K562 (cell line): ENCODE measurements at regions of chr3 and their contacts with region 1.

Region 1: GRCh38 chr3:52278510-52279069 is at the start of gene WDR82:
- DNase-seq: peak; percentile 87 to 93 (median 89)
- ATAC-seq: peak; percentile 88
- H3K4me3 ChIP-seq: peak within 1 kb of the TSS; percentile 73
- H3K27ac ChIP-seq: peak within 1 kb of the TSS; percentile 95
- H3K4me1 ChIP-seq: peaks cover 12 to 13% of the 10 kb centered on the region in 2 experiments; a peak in 4 of 5 replicates
- H3K27me3 ChIP-seq: no peaks in the 10 kb centered on the region
- CTCF ChIP-seq: peak; percentile 42 to 54 (median 52); a peak in 4 of 6 replicates
- EP300 ChIP-seq: no peak
- POLR2A ChIP-seq: peak; percentile 87
- RAD21 ChIP-seq: peak; percentile 27 to 39; a peak in 3 of 4 replicates
- polyA plus RNA-seq, gene WDR82: 6.4 to 8.0 TPM

Region 2: GRCh38 chr3:52046186-52046913 is 232.2 kb before region 1 on chr3:
- CTCF ChIA-PET with region 1: no interaction called
- POLR2A ChIA-PET with region 1: no interaction called
- in situ Hi-C with region 1: no loop called
- intact Hi-C with region 1: no loop called
- DNase-seq: no peak
- ATAC-seq: no peak
- H3K4me3 ChIP-seq: no peak overlapping the region
- H3K27ac ChIP-seq: no peak overlapping the region
- H3K4me1 ChIP-seq: peaks cover 3 to 39% of the 10 kb centered on the region in 2 experiments; a peak in 4 of 5 replicates
- H3K27me3 ChIP-seq: peaks cover 0 to 5% of the 10 kb centered on the region in 2 experiments; a peak in 1 of 5 replicates
- CTCF ChIP-seq: no peak
- EP300 ChIP-seq: no peak
- POLR2A ChIP-seq: no peak
- RAD21 ChIP-seq: no peak

Region 3: GRCh38 chr3:52240059-52240879 is 38.3 kb before region 1 on chr3:
- CTCF ChIA-PET with region 1: no interaction called
- POLR2A ChIA-PET with region 1: interaction called, 5 read pairs
- in situ Hi-C with region 1: no loop called
- intact Hi-C with region 1: loop called (anchors 1 kb)
- DNase-seq: peak; percentile 33 to 78 (median 48)
- ATAC-seq: peak; percentile 78
- H3K4me3 ChIP-seq: peak overlapping the region; percentile 67
- H3K27ac ChIP-seq: peak overlapping the region; percentile 80
- H3K4me1 ChIP-seq: peaks cover 40 to 43% of the 10 kb centered on the region in 2 experiments
- H3K27me3 ChIP-seq: no peaks in the 10 kb centered on the region
- CTCF ChIP-seq: peak; percentile 10 to 19 (median 14); a peak in 2 of 6 replicates
- EP300 ChIP-seq: peak; percentile 34
- POLR2A ChIP-seq: peak; percentile 41; the same call in 1 of the 2 replicates
- RAD21 ChIP-seq: peak in 1 of 2 experiments; percentile 27; a peak in 2 of 4 replicates

Region 4: DNA sequence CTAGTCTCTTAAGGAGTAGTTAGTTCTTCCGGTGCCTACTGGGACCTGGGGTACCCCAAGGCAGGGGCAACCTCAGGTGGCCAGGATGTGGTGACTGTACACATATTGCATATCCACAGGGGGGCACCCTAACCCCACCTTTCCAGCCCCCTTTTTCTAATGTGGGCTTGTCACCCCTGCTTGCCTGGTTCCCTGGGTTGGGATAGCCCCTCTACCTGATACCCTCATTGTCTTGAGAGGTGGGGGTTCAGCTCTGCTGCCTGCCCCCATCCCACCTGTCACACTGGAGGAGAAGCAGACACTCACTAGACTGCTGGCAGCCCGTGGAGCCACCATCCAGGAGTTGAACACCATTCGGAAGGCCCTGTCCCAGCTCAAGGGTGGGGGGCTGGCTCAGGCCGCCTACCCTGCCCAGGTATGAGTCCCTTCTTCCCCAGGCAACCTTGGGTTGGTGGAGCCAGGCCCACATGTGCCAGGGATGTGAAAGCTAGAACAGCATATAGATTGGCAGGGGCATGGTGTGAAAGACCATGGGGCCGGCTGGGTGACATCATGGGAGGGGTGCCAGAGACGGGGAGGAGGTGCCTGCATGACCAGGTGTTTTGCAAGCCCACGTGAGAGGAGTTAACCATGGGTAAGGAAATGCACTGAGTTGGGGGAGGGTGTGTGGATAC is 13.1 kb after region 1 on chr3:
- CTCF ChIA-PET with region 1: no interaction called
- POLR2A ChIA-PET with region 1: interaction called, 29 read pairs
- in situ Hi-C with region 1: no loop called
- intact Hi-C with region 1: no loop called
- DNase-seq: peak in 2 of 4 experiments; percentile 52 to 57
- ATAC-seq: peak; percentile 48
- H3K4me3 ChIP-seq: no peak overlapping the region
- H3K27ac ChIP-seq: no peak overlapping the region
- H3K4me1 ChIP-seq: peaks cover 12 to 26% of the 10 kb centered on the region in 2 experiments; a peak in 4 of 5 replicates
- H3K27me3 ChIP-seq: no peaks in the 10 kb centered on the region
- CTCF ChIP-seq: peak; percentile 60 to 77 (median 77)
- EP300 ChIP-seq: no peak
- POLR2A ChIP-seq: no peak
- RAD21 ChIP-seq: peak; percentile 80 to 87